ENCODE measurements at regions of chr22 and their contacts with region 1.

Region 1: DNA sequence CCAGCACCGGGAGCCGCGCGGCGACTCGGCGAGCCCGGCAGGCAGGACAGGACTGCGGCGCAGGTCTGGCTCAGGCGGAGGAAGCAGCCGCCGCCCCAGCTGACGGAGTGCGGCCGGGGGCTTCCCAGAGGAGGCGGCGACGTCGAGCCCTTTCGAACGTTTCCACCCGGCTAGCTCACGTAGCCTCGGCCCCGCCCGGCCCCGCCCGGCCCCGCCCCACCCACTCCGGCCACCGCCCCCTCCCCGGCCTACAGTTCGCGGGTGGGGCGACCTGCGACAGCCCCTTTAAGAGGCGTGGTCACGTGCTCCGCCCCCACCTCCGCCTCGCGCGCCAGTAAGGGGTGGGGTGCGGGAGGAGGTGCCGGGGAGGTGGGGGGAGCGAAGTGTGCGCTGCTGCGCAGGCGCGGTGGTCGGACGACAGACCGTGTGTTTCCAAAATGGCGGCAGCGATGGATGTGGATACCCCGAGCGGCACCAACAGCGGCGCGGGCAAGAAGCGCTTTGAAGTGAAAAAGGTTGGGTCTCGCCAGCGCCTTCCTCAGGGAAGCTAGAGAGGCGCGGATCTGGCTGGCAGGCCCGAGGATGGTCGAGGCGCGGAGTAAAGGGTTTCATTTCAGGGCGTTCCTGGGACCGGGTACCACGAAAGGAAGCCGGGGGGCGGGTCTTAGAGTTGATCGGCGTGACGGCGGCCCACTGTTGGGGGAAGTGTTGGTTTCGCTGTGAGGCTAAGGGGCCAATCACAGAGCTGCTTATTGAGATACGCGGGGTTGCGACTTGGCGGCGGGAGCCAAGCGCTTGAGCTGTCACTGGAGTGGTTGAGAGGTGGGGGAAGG is at the start of gene RBX1:
- DNase-seq: peak; percentile 90 to 97 (median 94)
- ATAC-seq: peak; percentile 92
- H3K4me3 ChIP-seq: peak within 1 kb of the TSS; percentile 47
- H3K27ac ChIP-seq: peak within 1 kb of the TSS; percentile 86
- H3K4me1 ChIP-seq: peaks cover 22 to 23% of the 10 kb centered on the region in 2 experiments; a peak in 4 of 5 replicates
- H3K27me3 ChIP-seq: no peaks in the 10 kb centered on the region
- CTCF ChIP-seq: no peak
- EP300 ChIP-seq: peak; percentile 8; the same call in 1 of the 2 replicates
- POLR2A ChIP-seq: peak; percentile 95
- RAD21 ChIP-seq: peak in 1 of 2 experiments; percentile 7; a peak in 1 of 4 replicates
- polyA plus RNA-seq, gene RBX1: 256 to 259 TPM

Region 2: DNA sequence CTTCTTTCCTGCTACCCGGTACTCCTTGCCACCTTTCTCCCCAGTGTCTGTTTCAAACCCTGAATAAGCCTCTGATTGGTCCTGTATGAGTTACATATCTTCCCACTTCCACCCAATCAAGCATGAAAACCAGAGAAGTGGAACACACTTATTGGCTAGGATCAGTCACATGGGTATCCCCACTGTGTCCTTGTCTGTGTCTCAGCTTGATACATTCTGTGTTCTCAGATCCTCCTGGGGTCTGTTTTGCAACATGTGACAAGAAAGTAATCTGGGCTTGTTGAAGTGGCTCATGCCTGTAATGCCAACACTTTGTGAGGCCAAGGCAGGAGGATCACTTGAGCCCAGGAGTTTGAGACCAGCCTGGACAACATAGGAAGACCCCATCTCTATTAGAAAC is 248.0 kb before region 1 on chr22:
- CTCF ChIA-PET with region 1: no interaction called
- POLR2A ChIA-PET with region 1: no interaction called
- in situ Hi-C with region 1: no loop called
- intact Hi-C with region 1: no loop called
- DNase-seq: peak in 1 of 4 experiments; percentile 42
- ATAC-seq: peak; percentile 58; the same call in 2 of the 3 replicates
- H3K4me3 ChIP-seq: no peak overlapping the region
- H3K27ac ChIP-seq: no peak overlapping the region
- H3K4me1 ChIP-seq: peaks cover 0 to 3% of the 10 kb centered on the region in 2 experiments; a peak in 1 of 5 replicates
- H3K27me3 ChIP-seq: peaks cover 1 to 4% of the 10 kb centered on the region in 2 experiments; a peak in 2 of 5 replicates
- CTCF ChIP-seq: no peak
- EP300 ChIP-seq: no peak
- POLR2A ChIP-seq: no peak
- RAD21 ChIP-seq: no peak

Region 3: GRCh38 chr22:41085842-41086241 is 134.7 kb after region 1 on chr22:
- CTCF ChIA-PET with region 1: no interaction called
- POLR2A ChIA-PET with region 1: interaction called, 4 read pairs
- in situ Hi-C with region 1: loop called (anchors 10 kb)
- intact Hi-C with region 1: loop called (anchors 1 kb)
- DNase-seq: no peak
- ATAC-seq: no peak
- H3K4me3 ChIP-seq: no peak overlapping the region
- H3K27ac ChIP-seq: no peak overlapping the region
- H3K4me1 ChIP-seq: peaks cover 0 to 3% of the 10 kb centered on the region in 2 experiments; a peak in 1 of 5 replicates
- H3K27me3 ChIP-seq: 0 out of 5 replicates have a peak, but pooled peaks cover 0 to under 1% of the 10 kb centered on the region in 2 experiments
- CTCF ChIP-seq: no peak
- EP300 ChIP-seq: no peak
- POLR2A ChIP-seq: no peak
- RAD21 ChIP-seq: no peak

Region 4: DNA sequence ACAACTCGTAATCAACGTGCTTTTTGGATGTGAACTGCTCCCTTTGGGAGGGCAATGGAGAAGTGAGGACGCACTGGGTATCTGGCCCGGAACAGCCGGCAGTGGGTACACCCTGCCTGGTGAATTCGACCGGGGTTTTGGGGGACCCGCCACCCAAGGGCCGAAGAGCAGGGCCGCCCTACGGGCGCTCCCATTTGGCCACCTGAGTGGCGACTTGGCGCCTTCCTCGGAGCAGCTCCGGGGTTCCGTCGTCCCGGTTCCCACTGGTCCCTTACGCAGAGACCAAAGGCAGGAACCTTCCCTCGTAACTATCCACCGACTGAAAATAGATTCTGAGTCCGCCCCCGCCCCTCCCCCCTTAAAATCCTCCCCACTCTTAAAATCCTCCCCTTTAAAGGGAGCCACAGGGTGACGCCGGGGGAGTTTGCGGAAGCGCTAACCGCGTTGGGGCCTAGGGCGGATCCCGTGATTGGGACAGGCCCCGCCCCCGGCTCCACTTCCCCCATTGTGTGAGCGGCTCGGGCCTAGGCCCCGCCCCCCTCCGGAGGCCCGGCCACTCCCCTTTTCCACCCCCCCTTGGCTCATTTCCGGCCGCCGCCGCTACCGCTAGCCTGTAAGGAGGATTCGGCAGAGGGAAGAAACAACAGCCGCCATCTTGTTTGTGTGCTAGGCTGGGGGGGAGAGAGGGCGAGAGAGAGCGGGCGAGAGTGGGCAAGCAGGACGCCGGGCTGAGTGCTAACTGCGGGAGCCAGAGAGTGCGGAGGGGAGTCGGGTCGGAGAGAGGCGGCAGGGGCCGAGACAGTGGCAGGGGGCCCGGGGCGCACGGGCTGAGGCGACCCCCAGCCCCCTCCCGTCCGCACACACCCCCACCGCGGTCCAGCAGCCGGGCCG is 140.2 kb after region 1 on chr22:
- CTCF ChIA-PET with region 1: no interaction called
- POLR2A ChIA-PET with region 1: interaction called, 4 read pairs
- in situ Hi-C with region 1: loop called (anchors 10 kb)
- intact Hi-C with region 1: loop called (anchors 1 kb)
- DNase-seq: peak; percentile 94 to 96 (median 96)
- ATAC-seq: peak; percentile 89
- H3K4me3 ChIP-seq: peak overlapping the region; percentile 68
- H3K27ac ChIP-seq: peak overlapping the region; percentile 99
- H3K4me1 ChIP-seq: peaks cover 6 to 7% of the 10 kb centered on the region in 2 experiments; a peak in 4 of 5 replicates
- H3K27me3 ChIP-seq: no peaks in the 10 kb centered on the region
- CTCF ChIP-seq: no peak
- EP300 ChIP-seq: no peak
- POLR2A ChIP-seq: peak; percentile 90
- RAD21 ChIP-seq: no peak